ENCODE measurements at regions of chr17 and their contacts with region 1.

Region 1: GRCh38 chr17:42087736-42088705 is 10.3 kb downstream of the ZNF385C start:
- DNase-seq: no peak
- ATAC-seq: no peak; the same call in 1 of the 2 replicates
- H3K4me3 ChIP-seq: no peak overlapping the region
- H3K27ac ChIP-seq: no peak overlapping the region
- H3K4me1 ChIP-seq: no peaks in the 10 kb centered on the region
- H3K27me3 ChIP-seq: no peaks in the 10 kb centered on the region
- CTCF ChIP-seq: no peak

Region 2: DNA sequence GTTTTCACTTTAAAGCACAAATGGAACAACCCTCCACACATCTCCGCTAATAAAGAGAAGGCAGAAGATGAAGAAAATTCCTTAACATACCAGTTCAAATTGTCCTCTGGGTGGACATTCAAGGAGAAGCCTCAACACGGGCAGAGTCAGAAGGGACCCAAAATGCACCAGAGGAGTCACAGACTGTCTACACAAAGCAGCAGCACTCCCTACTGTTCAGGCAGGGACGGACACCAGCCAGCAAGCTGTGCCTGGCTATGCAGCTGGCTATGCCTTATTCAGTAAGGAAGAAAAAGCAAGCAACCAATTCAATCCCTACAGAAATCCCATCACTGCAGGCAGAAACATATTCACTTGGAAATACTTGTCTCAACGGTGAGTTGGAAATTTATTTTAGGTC is 78.9 kb before region 1 on chr17:
- CTCF ChIA-PET with region 1: no interaction called
- POLR2A ChIA-PET with region 1: interaction called, 11 read pairs
- in situ Hi-C with region 1: no loop called
- intact Hi-C with region 1: no loop called
- DNase-seq: no peak
- ATAC-seq: no peak
- H3K4me3 ChIP-seq: no peak overlapping the region
- H3K27ac ChIP-seq: no peak overlapping the region
- H3K4me1 ChIP-seq: peaks cover 3% of the 10 kb centered on the region; the same call in 1 of the 2 replicates
- H3K27me3 ChIP-seq: no peaks in the 10 kb centered on the region
- CTCF ChIP-seq: no peak